OCI-LY7 (cell line): ENCODE measurements at regions of chr20 and their contacts with region 1.

Region 1: DNA sequence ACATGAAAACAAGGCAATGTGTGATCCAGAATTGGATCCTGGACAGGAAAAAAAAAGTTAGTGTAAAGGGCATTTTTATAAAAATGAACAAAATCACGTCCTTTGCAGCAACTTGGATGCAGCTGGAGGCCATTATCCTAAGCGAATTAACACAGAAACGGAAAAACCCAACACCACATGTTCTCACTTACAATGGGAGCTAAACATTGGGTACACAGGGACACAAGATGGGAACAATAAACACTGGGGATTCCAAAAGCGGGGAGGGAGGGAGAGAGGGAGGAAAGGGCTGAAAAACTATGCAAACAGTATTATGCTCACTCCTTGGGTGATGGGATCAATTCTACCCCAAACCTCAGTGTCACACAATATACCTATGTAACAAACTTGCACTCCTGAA is 91.4 kb upstream of the BTBD3 start:
- DNase-seq: no peak
- H3K4me3 ChIP-seq: no peak overlapping the region
- H3K27ac ChIP-seq: no peak overlapping the region
- H3K4me1 ChIP-seq: no peaks in the 10 kb centered on the region
- CTCF ChIP-seq: no peak

Region 2: DNA sequence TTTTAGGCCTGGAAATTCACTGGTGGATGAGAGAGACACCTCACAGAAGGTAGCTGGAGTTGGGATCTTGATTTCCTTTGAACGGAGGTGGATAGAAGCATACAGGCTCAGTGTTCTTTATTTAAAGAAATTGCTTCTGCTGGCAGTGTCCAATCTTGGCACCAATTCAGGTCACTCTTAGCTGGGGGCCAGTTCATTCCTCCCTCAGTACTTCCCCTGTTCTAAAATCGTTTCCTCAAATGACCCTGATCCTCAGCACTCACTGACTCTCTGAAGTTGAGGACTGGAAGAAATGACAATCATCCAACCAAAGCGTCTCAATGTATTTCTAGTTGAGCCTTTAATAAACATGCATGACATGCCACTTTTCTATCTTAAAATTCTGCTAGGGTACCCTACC is 381.2 kb before region 1 on chr20:
- CTCF ChIA-PET with region 1: no interaction called
- POLR2A ChIA-PET with region 1: no interaction called
- intact Hi-C with region 1: no loop called
- DNase-seq: no peak
- H3K4me3 ChIP-seq: no peak overlapping the region
- H3K27ac ChIP-seq: no peak overlapping the region
- H3K4me1 ChIP-seq: no peaks in the 10 kb centered on the region
- CTCF ChIP-seq: no peak

Region 3: GRCh38 chr20:11842022-11842421 is 15.7 kb after region 1 on chr20:
- CTCF ChIA-PET with region 1: no interaction called
- POLR2A ChIA-PET with region 1: interaction called, 10 read pairs
- intact Hi-C with region 1: no loop called
- DNase-seq: no peak
- H3K4me3 ChIP-seq: no peak overlapping the region
- H3K27ac ChIP-seq: no peak overlapping the region
- H3K4me1 ChIP-seq: no peaks in the 10 kb centered on the region
- CTCF ChIP-seq: no peak